Lower leg skin (tissue), 4 donors: ENCODE measurements at regions of chr20 and their contacts with region 1.

Region 1: DNA sequence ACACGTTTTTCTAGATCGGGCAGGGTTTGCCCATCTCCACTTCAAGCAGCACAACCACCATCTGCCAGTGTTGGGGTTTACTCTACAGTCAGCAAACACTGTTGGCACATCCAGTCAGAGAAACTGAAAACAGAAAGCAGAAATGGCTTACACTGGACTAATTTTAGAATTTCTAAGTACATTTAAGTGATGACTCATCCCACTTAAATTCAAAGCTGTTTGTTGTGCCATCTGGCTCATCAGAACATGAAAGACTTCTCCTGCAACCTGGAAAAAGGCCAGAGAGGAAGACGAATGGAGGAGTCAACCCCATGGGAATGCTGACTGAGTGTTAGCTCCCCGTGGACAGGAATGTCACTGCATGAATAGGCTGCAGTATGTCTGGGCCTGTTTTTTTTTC is 21.8 kb downstream of the FAM209B start:
- DNase-seq: peak in 1 of 2 donors; percentile 79
- H3K4me3 ChIP-seq: no peak overlapping the region
- CTCF ChIP-seq: no peak
- POLR2A ChIP-seq: no peak

Region 2: DNA sequence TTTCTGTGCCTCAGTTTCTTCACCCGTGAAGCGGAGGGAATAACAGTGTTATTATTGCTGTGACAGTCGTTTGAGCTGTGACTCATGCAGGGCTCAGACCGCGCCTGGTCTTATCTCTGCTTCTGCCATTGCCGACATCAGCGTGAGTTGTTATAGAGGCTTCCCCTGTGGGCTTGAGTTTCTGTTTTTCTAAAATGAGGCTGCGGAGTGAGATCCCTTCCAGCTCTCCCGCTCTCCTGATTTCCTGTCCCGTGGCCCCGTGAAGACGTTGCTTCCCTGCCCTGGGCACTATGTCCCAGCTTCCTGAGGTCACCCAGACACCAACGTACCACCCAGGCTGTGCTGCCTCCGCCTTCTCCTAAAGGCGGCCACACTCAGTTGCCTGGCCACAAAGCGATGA is 433.1 kb after region 1 on chr20:
- intact Hi-C with region 1: loop called (anchors 10 kb)
- DNase-seq: no peak
- H3K4me3 ChIP-seq: no peak overlapping the region
- CTCF ChIP-seq: no peak
- POLR2A ChIP-seq: no peak

Region 3: DNA sequence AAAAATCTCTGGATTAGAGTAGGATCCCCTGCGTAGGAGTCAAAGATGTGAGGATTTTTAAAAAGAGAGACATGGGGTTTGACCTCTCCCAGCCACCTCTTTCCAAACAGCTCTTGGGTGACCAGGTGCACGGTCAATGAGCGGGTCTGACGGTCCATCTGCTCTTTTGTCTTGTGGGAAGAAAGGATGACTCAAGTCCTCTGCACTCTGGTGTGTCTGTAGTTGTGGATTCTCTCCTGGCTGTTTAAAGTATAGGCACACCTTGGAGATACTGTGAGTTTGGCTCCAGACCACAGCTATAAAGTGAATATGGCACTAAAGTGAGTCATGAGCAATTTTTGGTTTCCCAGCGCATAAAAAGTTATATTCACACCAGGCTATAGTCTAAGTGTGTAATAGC is 501.8 kb after region 1 on chr20:
- intact Hi-C with region 1: loop called (anchors 10 kb)
- DNase-seq: no peak
- H3K4me3 ChIP-seq: no peak overlapping the region
- CTCF ChIP-seq: no peak
- POLR2A ChIP-seq: no peak